GM12878 (cell line): ENCODE measurements at regions of chr22 and their contacts with region 1.

Region 1: GRCh38 chr22:30396871-30397655 is at the start of gene SEC14L2:
- DNase-seq: no peak
- ATAC-seq: peak; percentile 59
- H3K4me3 ChIP-seq: peak within 1 kb of the TSS; percentile 32; the same call in 1 of the 2 replicates
- H3K27ac ChIP-seq: no peak within 1 kb of the TSS
- H3K4me1 ChIP-seq: peaks cover 18% of the 10 kb centered on the region
- H3K27me3 ChIP-seq: peaks cover 4 to 9% of the 10 kb centered on the region in 2 experiments
- CTCF ChIP-seq: no peak
- EP300 ChIP-seq: no peak
- POLR2A ChIP-seq: peak; percentile 58
- RAD21 ChIP-seq: no peak
- polyA plus RNA-seq, gene SEC14L2: 0.08 to 0.11 TPM

Region 2: GRCh38 chr22:30413745-30414524 is 16.9 kb after region 1 on chr22:
- CTCF ChIA-PET with region 1: interaction called, 9 read pairs
- POLR2A ChIA-PET with region 1: interaction called, 11 read pairs
- RAD21 ChIA-PET with region 1: interaction called, 5 read pairs
- SMC1A ChIA-PET with region 1: interaction called, 5 read pairs
- in situ Hi-C with region 1: no loop called
- intact Hi-C with region 1: no loop called
- DNase-seq: no peak
- ATAC-seq: no peak
- H3K4me3 ChIP-seq: no peak overlapping the region
- H3K27ac ChIP-seq: no peak overlapping the region
- H3K4me1 ChIP-seq: no peaks in the 10 kb centered on the region
- H3K27me3 ChIP-seq: no peaks in the 10 kb centered on the region
- CTCF ChIP-seq: no peak
- EP300 ChIP-seq: no peak
- POLR2A ChIP-seq: no peak
- RAD21 ChIP-seq: no peak